RWPE1 (cell line): ENCODE measurements at regions of chr5 and their contacts with region 1.

Region 1: GRCh38 chr5:54905943-54906537 is 79.4 kb downstream of the ESM1 start:
- DNase-seq: peak; percentile 70
- H3K27ac ChIP-seq: no peak overlapping the region
- CTCF ChIP-seq: peak; percentile 78

Region 2: DNA sequence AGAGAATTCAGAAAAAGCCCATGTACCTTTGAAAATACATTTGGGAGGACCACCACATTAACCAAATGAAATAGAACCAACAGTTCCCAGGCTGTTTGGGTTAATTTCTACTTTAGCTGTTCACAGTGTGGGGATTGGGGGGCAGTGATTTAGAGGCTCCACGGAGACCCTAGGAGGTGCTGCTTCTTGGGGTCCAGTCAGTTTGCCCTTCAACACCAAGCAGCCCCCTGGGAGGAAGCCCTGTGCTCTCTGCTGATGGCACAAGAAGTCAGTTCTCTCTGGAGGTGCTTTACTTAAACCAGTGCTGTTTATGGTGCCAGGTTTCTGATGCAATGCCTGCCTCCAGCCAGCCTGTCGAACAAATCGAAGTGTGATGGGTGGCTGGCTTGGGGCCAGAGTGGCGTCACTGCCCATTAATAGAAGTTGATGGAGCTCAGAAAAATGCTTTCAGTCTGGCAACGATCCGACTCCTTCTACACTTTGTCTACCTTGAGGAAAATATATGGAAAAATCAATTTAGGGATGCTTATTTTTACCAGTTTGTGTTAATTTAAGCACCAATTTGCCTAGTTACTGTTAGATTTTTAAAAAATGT is 254.5 kb before region 1 on chr5:
- CTCF ChIA-PET with region 1: no interaction called
- POLR2A ChIA-PET with region 1: no interaction called
- DNase-seq: peak; percentile 95
- H3K27ac ChIP-seq: peak overlapping the region; percentile 74
- CTCF ChIP-seq: no peak

Region 3: DNA sequence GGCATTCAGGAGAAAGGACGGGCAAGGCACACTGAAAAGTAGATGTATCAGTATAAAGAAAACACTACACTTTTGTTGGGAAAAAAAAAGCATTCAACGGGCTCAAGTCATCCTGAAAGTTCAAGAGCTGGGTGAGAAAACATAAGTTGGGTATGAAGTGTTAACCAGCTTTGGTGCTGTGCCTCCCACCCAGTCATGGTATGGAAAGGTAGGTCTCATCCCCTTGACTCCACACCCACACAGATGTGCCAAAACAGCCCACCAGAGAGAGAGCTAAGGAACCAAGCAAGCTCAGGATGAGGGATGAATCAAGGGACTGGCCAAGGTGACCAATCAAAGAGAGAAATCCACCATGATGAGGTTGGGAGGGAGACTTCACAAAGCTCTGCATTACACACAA is 24.7 kb after region 1 on chr5:
- CTCF ChIA-PET with region 1: no interaction called
- POLR2A ChIA-PET with region 1: no interaction called
- DNase-seq: no peak
- H3K27ac ChIP-seq: no peak overlapping the region
- CTCF ChIP-seq: no peak

Region 4: DNA sequence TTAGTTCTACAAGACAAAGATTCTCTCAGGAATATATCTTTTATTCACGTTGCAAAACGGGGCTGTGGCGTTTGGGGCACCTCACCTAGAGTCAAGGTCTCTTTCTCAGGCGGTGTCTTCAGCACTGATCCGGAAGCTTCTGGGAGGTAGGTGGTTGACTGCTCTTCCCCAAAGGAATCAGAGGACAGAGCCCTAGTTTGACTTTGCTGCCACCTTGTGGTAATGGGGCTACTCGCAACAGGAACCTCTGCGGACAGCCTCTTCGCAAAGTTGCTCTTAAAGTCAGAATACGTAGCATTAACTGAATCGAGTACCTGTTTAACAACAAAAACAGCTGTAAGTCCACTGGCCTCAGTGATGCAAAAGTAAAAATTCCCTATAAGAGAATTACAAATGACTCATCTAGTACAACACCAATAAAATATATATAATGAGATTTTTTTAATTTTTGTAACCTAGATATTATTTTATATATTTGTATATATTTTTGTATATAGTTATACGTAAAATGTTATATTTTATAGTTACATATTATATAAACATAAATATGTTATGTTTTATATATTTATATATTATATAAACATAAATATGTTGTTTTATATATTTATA is 240.6 kb after region 1 on chr5:
- CTCF ChIA-PET with region 1: interaction called, 14 read pairs
- POLR2A ChIA-PET with region 1: no interaction called
- DNase-seq: peak; percentile 87
- H3K27ac ChIP-seq: no peak overlapping the region
- CTCF ChIP-seq: peak; percentile 98

Region 5: GRCh38 chr5:55159763-55160492 is 253.9 kb after region 1 on chr5 and contains the start of gene GPX8:
- CTCF ChIA-PET with region 1: interaction called, 54 read pairs
- POLR2A ChIA-PET with region 1: interaction called, 5 read pairs
- DNase-seq: peak; percentile 87
- H3K27ac ChIP-seq: no peak within 1 kb of the TSS
- CTCF ChIP-seq: peak; percentile 83